Right ventricle myocardium inferior (tissue), 1 donor: ENCODE measurements at regions of chr20 and their contacts with region 1.

Region 1: GRCh38 chr20:24917797-24918578 is 31.1 kb upstream of the CST7 start:
- DNase-seq: peak; percentile 83
- ATAC-seq: peak; percentile 82

Region 2: GRCh38 chr20:23889775-23890211 is 1028.2 kb before region 1 on chr20:
- intact Hi-C with region 1: loop called (anchors 5 kb)
- DNase-seq: no peak
- ATAC-seq: peak; percentile 73

Region 3: GRCh38 chr20:23937303-23938117 is 980.5 kb before region 1 on chr20:
- intact Hi-C with region 1: loop called (anchors 10 kb)
- DNase-seq: no peak
- ATAC-seq: peak; percentile 93

Region 4: DNA sequence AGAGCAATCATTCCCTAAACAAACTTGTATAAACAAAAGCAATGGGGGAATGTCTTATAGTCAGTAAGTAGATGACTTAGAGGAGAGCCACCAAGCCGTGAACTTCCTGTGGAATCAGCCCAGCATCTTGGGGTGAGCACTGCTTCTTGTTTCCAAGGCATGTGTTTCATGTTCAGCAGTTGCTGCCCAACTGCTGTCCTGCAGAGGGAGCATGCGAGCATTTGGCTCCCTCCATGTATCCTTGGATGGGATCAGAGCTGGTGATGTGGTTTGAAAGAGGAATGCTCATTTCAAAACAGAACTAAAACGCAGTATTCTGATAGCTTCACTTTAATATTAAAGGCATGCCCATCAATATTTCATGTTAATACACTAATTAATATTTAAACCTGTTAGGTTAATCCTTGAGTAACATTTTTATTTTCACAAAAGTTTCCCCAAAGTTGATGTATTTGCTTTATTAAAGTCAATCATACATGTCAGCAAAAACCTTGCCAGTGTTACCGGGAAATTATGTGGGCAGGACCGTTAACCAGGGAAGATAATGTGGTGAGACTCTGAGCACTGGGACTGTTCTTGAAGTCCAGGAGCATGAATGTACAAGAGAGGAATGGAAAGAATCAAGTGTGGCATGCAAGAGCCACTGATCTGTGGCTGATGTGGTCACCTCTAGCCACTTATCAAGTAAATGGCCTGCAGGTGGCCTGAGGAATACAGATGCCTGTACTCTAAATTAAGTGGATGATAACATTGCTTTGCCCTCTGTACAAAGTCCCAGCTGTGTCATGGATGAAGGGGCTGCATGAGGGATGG is 757.2 kb before region 1 on chr20:
- intact Hi-C with region 1: loop called (anchors 5 kb)
- DNase-seq: no peak
- ATAC-seq: no peak

Region 5: GRCh38 chr20:24522452-24523330 is 395.3 kb before region 1 on chr20:
- intact Hi-C with region 1: no loop called
- DNase-seq: no peak
- ATAC-seq: no peak

Region 6: DNA sequence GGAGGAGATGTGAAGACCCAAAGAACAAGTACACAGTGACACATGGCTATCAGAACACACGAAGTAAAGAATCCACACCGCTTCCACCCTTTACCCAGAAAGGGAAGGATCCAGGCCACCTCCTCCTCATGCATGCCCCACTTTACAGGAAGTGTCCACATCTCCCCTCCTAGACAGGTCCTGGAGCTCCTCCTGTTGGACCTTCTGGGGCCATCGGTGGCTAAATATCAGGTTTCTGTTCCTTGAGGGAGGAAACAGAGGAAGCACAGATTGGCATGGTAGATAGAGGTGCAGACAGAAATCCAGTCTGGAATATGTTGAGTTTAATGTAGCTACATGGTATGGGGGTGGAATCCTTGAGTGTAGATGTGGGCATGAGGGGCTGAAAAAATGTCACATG is 656.4 kb after region 1 on chr20:
- intact Hi-C with region 1: no loop called
- DNase-seq: no peak
- ATAC-seq: no peak